CD4-positive, alpha-beta memory T cell (primary cell): ENCODE measurements at regions of chr17 and their contacts with region 1.

Region 1: DNA sequence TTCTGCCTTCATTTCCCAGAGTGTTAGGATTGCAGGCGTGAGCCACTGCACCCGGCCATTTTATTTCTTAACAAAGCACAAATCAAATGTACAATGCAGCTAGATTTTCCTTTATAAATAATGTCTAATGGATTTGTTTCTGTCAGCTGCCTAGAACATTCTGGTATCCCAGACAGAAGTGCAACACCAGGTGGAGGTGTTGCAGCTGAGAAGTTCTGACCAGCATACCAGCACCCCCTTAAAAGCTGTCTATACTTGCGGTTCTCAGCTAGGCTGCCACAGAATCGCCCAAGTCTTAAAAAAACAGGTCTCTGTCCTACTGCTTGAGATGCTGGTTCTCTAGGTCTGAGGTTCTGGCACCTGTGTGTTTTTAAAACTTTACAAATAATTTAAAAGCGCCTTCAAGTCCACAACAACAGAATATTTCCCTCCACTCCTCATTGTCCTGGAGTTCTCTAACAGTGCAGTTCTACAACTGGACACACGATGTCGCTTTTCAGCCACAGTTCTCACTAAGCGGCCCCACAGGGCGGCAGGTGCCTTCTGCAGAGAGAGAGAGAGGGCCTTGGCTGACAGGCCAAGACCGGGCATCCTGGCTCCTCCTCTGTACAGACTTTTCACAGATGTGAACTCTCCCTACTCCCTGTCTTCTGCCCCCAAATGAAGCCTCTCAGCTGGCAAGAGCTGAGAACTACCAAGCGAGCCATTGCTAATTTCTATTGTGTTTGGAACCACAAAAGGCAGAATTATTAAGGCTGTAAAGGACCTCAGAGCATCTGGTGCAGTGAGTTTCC is 32.6 kb upstream of the MEOX1 start:
- DNase-seq: peak; percentile 69 to 77 (median 74)
- H3K4me3 ChIP-seq: no peak overlapping the region
- H3K4me3 Mint-ChIP-seq: no peak overlapping the region
- H3K27ac ChIP-seq: no peak overlapping the region
- H3K27ac Mint-ChIP-seq: no peak overlapping the region
- H3K4me1 ChIP-seq: no peaks in the 10 kb centered on the region
- H3K4me1 Mint-ChIP-seq: no peaks in the 10 kb centered on the region
- H3K27me3 ChIP-seq: no peaks in the 10 kb centered on the region
- H3K27me3 Mint-ChIP-seq: peaks cover 3 to 5% of the 10 kb centered on the region in 2 donors

Region 2: DNA sequence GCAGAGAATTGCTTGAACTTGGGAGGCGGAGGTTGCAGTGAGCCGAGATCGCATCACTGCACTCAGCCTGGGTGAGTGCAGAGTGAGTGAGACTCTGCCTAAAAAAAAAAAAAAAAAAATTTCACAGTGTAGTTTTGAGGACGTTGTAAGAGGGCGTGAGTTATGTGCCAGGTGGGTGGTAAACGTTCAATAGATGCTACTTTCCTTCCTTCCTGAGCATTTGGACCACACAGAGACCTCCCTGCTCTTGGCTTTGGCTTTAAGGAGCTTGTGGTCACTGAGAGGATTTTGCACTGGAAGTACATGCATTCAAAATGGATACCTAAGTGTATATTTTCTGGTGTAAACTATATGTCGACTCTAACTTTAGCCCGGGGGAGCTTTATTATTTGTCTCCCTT is 33.8 kb after region 1 on chr17:
- CTCF ChIA-PET with region 1: interaction called, 12 read pairs
- POLR2A ChIA-PET with region 1: no interaction called
- intact Hi-C with region 1: no loop called
- DNase-seq: no peak
- H3K4me3 ChIP-seq: no peak overlapping the region
- H3K4me3 Mint-ChIP-seq: no peak overlapping the region
- H3K27ac ChIP-seq: no peak overlapping the region
- H3K27ac Mint-ChIP-seq: no peak overlapping the region
- H3K4me1 ChIP-seq: no peaks in the 10 kb centered on the region
- H3K4me1 Mint-ChIP-seq: no peaks in the 10 kb centered on the region
- H3K27me3 ChIP-seq: no peaks in the 10 kb centered on the region
- H3K27me3 Mint-ChIP-seq: peaks cover 0 to 1% of the 10 kb centered on the region in 2 donors

Region 3: DNA sequence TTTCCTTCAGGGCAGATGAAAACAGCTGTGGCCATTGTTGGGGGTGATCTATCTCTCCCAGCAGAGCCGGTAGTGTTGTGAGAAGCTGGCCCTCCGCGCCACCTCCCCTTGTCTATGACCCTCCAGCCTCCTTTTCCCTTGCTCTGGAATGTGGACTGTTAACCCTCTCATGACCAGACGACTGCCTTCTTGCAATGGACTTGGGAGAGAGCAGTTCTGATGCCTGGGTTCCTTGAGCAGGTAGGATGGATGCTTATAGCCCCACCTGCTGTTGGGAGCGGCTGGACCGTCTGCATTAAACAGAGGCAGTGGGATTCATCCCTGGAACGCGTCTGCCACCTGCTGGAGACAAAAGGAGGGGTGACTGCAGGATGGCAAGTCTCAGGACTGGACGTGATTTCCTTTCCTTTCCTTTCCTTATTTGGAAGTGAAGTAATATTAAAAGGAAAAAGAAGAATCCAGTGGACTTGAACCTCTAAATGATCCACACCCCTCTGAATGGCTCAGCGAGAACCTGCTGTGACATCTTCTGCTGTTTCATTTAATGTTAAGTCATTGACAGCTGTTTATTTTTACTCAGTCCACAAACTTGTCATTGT is 66.1 kb after region 1 on chr17:
- CTCF ChIA-PET with region 1: interaction called, 625 read pairs
- POLR2A ChIA-PET with region 1: interaction called, 4 read pairs
- intact Hi-C with region 1: loop called (anchors 1 kb)
- DNase-seq: peak; percentile 79 to 85 (median 83)
- H3K4me3 ChIP-seq: no peak overlapping the region
- H3K4me3 Mint-ChIP-seq: no peak overlapping the region
- H3K27ac ChIP-seq: no peak overlapping the region
- H3K27ac Mint-ChIP-seq: no peak overlapping the region
- H3K4me1 ChIP-seq: no peaks in the 10 kb centered on the region
- H3K4me1 Mint-ChIP-seq: peaks cover 0 to 6% (median 4%) of the 10 kb centered on the region in 4 donors
- H3K27me3 ChIP-seq: no peaks in the 10 kb centered on the region
- H3K27me3 Mint-ChIP-seq: peaks cover 18 to 19% of the 10 kb centered on the region in 2 donors

Region 4: GRCh38 chr17:43766413-43767052 is 72.3 kb after region 1 on chr17:
- CTCF ChIA-PET with region 1: interaction called, 625 read pairs
- POLR2A ChIA-PET with region 1: interaction called, 3 read pairs
- intact Hi-C with region 1: loop called (anchors 1 kb)
- DNase-seq: peak in 3 of 5 donors; percentile 10 to 36 (median 29)
- H3K4me3 ChIP-seq: no peak overlapping the region
- H3K4me3 Mint-ChIP-seq: no peak overlapping the region
- H3K27ac ChIP-seq: no peak overlapping the region
- H3K27ac Mint-ChIP-seq: no peak overlapping the region
- H3K4me1 ChIP-seq: no peaks in the 10 kb centered on the region
- H3K4me1 Mint-ChIP-seq: no peaks in the 10 kb centered on the region
- H3K27me3 ChIP-seq: no peaks in the 10 kb centered on the region
- H3K27me3 Mint-ChIP-seq: peaks cover 0 to 2% of the 10 kb centered on the region in 2 donors

Region 5: DNA sequence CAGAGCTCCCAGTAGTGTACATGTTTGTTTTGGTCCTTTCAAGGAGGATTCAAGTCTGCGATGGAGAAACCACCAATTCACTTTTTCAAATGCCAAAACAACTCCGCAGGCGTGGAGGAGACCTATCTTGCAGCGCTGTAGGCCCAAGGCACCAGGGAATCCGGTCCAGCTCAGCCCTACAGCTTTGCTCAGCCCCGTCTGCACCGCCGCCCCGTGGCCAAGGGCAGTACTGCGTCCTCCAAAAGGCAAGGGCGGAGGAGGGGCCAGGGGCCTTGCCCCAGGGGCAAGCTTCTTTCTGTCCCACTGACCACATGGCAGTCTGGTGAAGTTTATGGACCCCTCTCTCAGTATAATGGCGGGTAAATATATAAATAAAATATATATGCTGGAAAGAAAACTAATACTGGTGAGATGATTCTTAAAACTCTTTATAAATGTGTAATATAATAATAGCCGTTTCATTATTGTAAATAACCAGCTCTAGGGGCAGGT is 152.0 kb after region 1 on chr17:
- CTCF ChIA-PET with region 1: interaction called, 5 read pairs
- POLR2A ChIA-PET with region 1: no interaction called
- intact Hi-C with region 1: loop called (anchors 1 kb)
- DNase-seq: peak; percentile 56 to 70 (median 61)
- H3K4me3 ChIP-seq: no peak overlapping the region
- H3K4me3 Mint-ChIP-seq: no peak overlapping the region
- H3K27ac ChIP-seq: no peak overlapping the region
- H3K27ac Mint-ChIP-seq: no peak overlapping the region
- H3K4me1 ChIP-seq: no peaks in the 10 kb centered on the region
- H3K4me1 Mint-ChIP-seq: peaks cover 0 to 3% (median 0%) of the 10 kb centered on the region in 4 donors
- H3K27me3 ChIP-seq: peaks cover 5% of the 10 kb centered on the region
- H3K27me3 Mint-ChIP-seq: peaks cover 16 to 22% of the 10 kb centered on the region in 2 donors